Left ventricle myocardium inferior (tissue), 1 donor: ENCODE measurements at regions of chr16 and their contacts with region 1.

Region 1: DNA sequence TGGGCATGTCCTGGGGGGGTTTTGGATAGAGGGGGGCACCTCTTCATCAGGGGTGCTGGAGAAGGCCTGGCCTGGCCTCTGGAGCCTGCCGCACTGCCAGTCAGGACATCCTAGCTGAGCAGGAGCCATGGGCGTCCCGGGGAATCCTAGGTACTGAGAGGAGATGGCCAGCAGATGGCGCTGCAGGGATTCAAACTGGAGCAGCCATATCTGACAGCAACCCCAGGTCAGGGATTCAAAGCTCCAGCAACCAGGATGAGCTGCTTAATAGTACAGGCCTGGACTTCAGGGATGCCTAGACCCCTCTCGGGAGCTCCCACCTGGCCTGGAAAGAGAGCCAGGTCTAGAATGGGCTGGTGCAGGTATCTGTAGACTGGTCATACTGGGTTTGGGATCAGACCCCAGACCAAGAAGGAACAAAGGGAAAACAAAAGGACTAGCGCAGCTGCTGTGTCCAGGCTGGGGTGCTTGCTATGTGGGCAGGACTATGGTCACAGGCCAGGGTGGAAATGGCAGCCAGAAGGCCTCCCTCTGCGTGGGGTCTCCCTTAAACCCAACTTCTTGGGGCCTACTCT is 306.9 kb upstream of the RBFOX1 start:
- DNase-seq: peak; percentile 58
- H3K4me3 ChIP-seq: no peak overlapping the region
- H3K27ac ChIP-seq: no peak overlapping the region
- H3K4me1 ChIP-seq: no peaks in the 10 kb centered on the region
- H3K27me3 ChIP-seq: peaks cover 4% of the 10 kb centered on the region
- CTCF ChIP-seq: peak; percentile 75

Region 2: DNA sequence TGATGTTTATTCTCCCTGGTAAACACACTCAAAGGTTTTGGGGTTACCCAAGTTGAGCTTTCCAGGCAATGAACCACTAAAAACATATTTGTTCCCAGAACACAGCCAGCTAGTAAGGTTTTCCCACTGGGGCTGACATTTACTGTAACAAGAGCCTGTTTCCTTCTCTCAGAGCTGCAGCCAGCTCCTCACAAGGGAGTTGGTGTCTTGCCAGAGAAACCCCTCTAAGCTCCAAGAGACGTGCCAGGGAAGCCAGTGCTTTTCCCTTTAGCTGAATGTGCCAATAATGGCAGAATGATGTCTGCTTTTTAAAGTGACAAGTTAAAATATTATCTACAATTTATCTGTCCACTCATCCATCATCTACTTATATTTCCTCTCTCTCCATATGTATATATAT is 136.2 kb after region 1 on chr16:
- intact Hi-C with region 1: no loop called
- DNase-seq: no peak
- H3K4me3 ChIP-seq: no peak overlapping the region
- H3K27ac ChIP-seq: no peak overlapping the region
- H3K4me1 ChIP-seq: no peaks in the 10 kb centered on the region
- H3K27me3 ChIP-seq: peaks cover 4% of the 10 kb centered on the region
- CTCF ChIP-seq: no peak

Region 3: DNA sequence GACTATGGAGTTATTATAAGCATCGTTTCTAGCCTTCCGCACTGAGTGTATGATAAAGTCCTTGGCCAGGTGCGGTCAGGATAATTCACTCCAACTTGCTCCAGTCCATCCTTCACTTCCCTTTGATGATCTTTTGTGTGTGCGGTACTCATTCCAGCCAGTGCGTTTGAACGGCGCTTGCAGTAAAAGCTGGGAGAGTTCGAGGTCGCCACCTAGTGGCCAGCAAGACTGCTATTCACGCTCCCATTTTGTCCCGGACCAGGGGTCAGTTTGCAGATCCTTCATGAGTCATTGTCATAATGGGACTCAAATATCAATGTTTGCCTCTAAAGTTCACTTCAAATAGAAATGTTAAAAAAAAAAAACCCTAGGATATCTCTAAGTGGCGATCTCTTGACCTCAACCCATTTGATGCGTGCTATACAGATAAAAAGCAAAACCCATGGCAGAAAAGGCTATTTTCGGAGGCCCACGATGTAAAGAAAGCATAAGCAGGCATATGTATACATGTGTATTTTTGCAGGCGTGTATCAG is 1147.5 kb after region 1 on chr16:
- intact Hi-C with region 1: loop called (anchors 10 kb)
- DNase-seq: peak; percentile 48
- H3K4me3 ChIP-seq: no peak overlapping the region
- H3K27ac ChIP-seq: no peak overlapping the region
- H3K4me1 ChIP-seq: no peaks in the 10 kb centered on the region
- H3K27me3 ChIP-seq: peaks cover 35% of the 10 kb centered on the region
- CTCF ChIP-seq: peak; percentile 86